ENCODE measurements at regions of chr19 and their contacts with region 1.

Region 1: DNA sequence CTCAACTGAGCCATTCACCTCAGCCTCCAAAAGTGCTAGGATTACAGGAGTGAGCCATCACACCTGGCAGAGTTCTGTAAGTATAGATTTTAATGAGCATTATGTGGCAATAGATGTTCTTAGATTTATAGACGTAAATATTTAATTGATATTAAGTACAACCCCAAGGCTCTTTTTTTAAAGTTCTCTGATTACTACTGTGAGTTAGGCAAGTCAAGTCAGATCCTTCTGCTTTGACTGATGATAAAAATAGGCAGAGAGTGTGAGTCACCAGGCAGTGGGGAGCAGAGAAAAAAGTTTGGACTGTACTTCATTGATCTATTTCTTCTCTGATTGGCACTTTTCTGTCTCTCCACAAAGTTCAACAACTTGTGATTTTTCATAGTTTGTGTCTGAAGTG is 1379.9 kb downstream of the UQCRFS1 start:
- DNase-seq: no peak
- ATAC-seq: no peak

Region 2: GRCh38 chr19:27759896-27760295 is 73.1 kb before region 1 on chr19:
- intact Hi-C with region 1: loop called (anchors 2 kb)
- DNase-seq: no peak
- ATAC-seq: no peak

Region 3: DNA sequence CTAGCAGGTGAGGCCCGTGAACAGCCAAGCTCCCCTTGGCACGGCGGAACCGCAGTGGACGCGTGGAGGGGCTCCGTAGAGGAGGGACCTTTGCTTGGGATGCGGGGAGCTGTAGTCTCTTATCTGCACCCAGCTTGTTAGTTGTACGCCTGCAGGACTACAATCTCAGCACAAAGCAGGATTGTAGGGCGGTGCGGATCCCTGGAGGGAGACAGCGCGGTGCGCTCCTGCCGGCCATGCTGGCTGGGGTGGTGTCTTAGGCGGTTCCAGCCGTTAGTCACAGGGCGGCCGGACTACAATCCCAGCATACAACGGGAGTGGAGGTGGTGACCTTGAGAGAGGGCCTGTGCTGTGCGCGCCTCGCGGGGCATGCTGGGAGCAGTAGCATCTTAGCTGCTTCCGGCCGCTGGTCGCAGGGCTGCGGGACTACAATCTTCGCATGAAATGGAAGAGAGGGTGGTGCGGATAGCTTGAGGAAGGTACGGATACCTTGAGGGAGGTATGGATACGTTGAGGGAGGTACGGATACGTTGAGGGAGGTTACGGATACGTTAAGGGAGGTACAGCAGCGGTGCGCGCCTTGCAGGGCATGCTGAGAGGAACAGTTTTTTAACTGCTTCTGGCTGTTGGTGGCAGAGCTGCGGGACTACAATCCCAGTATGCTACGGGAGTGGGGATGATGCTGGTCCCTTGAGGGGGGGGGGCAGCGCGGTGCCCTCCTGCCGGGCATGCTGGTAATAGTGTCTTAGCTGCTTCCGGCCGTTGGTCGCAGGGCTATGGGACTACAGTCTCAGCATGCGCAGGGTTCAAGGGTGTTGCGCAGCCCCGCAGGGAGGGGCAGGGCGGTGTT is 39.2 kb before region 1 on chr19:
- intact Hi-C with region 1: no loop called
- DNase-seq: peak; percentile 94
- ATAC-seq: peak; percentile 99

Region 4: GRCh38 chr19:27906081-27906480 is 73.0 kb after region 1 on chr19:
- intact Hi-C with region 1: no loop called
- DNase-seq: no peak
- ATAC-seq: peak; percentile 68